B cell (primary cell): ENCODE measurements at regions of chr20 and their contacts with region 1.

Region 1: DNA sequence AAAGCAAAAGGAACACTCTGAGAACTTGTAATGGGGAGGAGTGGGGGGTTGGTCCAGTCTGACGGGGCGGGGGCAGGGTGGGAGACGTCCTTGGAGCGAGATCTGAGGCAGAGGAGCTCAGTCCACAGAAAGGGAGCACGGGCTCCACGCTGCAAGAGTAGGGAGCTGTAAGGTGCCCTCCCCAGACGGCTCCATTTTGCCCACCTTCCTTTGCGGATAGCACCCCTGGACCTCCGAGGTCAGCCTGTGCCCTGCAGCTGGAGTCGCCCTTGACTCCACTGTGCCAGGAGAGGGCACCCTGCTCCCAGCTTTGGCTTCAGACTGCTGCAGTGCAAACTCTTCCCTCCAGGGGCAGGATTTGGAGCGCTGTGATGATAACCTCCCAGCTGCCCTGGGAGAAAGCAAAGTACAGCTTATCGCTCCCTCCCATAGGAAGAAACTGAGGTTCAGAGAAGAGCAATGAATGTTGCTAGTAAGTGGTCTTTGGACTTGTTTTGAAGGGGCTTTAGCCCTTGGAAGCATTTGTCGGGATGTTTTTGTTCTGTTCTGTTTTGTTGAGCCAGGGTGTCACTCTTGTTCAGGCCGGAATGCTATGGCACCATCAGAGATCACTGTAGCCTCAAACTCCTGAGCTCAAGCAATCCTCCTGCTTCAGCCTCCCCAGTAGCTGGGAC is 9.5 kb upstream of the AHCY start:
- DNase-seq: peak; percentile 90
- ATAC-seq: peak; percentile 100
- H3K4me3 ChIP-seq: no peak overlapping the region
- H3K4me3 Mint-ChIP-seq: peak overlapping the region; percentile 32
- H3K27ac ChIP-seq: no peak overlapping the region
- H3K27ac Mint-ChIP-seq: peak overlapping the region; percentile 50
- H3K4me1 ChIP-seq: peaks cover 17 to 20% of the 10 kb centered on the region in 2 donors
- H3K4me1 Mint-ChIP-seq: peaks cover 16% of the 10 kb centered on the region
- H3K27me3 ChIP-seq: peaks cover 0 to 18% (median 13%) of the 10 kb centered on the region in 4 experiments
- H3K27me3 Mint-ChIP-seq: peaks cover 13% of the 10 kb centered on the region
- CTCF ChIP-seq: peak; percentile 100

Region 2: DNA sequence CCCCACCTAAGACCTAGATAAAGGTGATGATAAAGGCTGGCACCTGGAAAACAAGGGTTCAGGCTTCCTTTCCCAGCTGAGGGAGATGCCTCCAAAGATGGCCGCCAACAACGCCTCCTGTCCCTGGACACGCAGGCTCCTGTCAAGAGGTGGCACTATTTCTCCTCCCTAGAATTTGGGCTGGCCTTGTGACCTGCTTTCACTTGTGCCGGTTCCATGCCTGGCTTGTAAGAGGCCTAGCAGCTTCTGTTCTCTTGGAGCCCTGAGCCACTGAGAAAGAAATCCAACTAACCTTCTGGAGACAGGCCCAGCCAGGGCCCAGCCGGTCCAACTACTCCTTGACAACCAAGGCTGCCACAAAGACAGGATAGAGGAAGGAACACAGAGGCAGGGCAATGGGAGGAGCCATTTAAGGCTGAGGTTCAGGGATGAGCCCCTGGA is 379.2 kb before region 1 on chr20:
- CTCF ChIA-PET with region 1: no interaction called
- POLR2A ChIA-PET with region 1: no interaction called
- intact Hi-C with region 1: no loop called
- DNase-seq: peak; percentile 47
- ATAC-seq: peak; percentile 45
- H3K4me3 ChIP-seq: no peak overlapping the region
- H3K4me3 Mint-ChIP-seq: no peak overlapping the region
- H3K27ac ChIP-seq: no peak overlapping the region
- H3K27ac Mint-ChIP-seq: no peak overlapping the region
- H3K4me1 ChIP-seq: no peaks in the 10 kb centered on the region
- H3K4me1 Mint-ChIP-seq: no peaks in the 10 kb centered on the region
- H3K27me3 ChIP-seq: no peaks in the 10 kb centered on the region
- H3K27me3 Mint-ChIP-seq: peaks cover 13% of the 10 kb centered on the region
- CTCF ChIP-seq: no peak

Region 3: GRCh38 chr20:34363062-34363464 is 50.4 kb after region 1 on chr20 and contains the start of gene ITCH:
- CTCF ChIA-PET with region 1: interaction called, 25 read pairs
- POLR2A ChIA-PET with region 1: no interaction called
- intact Hi-C with region 1: loop called (anchors 2 kb)
- DNase-seq: peak; percentile 94
- ATAC-seq: peak; percentile 96
- H3K4me3 ChIP-seq: peak within 1 kb of the TSS; percentile 46 to 91 (median 88)
- H3K4me3 Mint-ChIP-seq: peak within 1 kb of the TSS; percentile 97
- H3K27ac ChIP-seq: peak within 1 kb of the TSS; percentile 81 to 96
- H3K27ac Mint-ChIP-seq: peak within 1 kb of the TSS; percentile 98
- H3K4me1 ChIP-seq: peaks cover 34 to 38% of the 10 kb centered on the region in 2 donors
- H3K4me1 Mint-ChIP-seq: peaks cover 35% of the 10 kb centered on the region
- H3K27me3 ChIP-seq: no peaks in the 10 kb centered on the region
- H3K27me3 Mint-ChIP-seq: no peaks in the 10 kb centered on the region
- CTCF ChIP-seq: no peak
- total RNA-seq, gene ITCH: 89.6 and 110 TPM in 2 replicates

Region 4: GRCh38 chr20:34437330-34437986 is 124.8 kb after region 1 on chr20:
- CTCF ChIA-PET with region 1: interaction called, 27 read pairs
- POLR2A ChIA-PET with region 1: no interaction called
- intact Hi-C with region 1: no loop called
- DNase-seq: no peak
- ATAC-seq: no peak
- H3K4me3 ChIP-seq: no peak overlapping the region
- H3K4me3 Mint-ChIP-seq: no peak overlapping the region
- H3K27ac ChIP-seq: peak overlapping the region in 1 of 2 donors; percentile 18
- H3K27ac Mint-ChIP-seq: peak overlapping the region; percentile 46
- H3K4me1 ChIP-seq: peaks cover 8 to 16% of the 10 kb centered on the region in 2 donors
- H3K4me1 Mint-ChIP-seq: peaks cover 21% of the 10 kb centered on the region
- H3K27me3 ChIP-seq: no peaks in the 10 kb centered on the region
- H3K27me3 Mint-ChIP-seq: no peaks in the 10 kb centered on the region
- CTCF ChIP-seq: no peak

Region 5: DNA sequence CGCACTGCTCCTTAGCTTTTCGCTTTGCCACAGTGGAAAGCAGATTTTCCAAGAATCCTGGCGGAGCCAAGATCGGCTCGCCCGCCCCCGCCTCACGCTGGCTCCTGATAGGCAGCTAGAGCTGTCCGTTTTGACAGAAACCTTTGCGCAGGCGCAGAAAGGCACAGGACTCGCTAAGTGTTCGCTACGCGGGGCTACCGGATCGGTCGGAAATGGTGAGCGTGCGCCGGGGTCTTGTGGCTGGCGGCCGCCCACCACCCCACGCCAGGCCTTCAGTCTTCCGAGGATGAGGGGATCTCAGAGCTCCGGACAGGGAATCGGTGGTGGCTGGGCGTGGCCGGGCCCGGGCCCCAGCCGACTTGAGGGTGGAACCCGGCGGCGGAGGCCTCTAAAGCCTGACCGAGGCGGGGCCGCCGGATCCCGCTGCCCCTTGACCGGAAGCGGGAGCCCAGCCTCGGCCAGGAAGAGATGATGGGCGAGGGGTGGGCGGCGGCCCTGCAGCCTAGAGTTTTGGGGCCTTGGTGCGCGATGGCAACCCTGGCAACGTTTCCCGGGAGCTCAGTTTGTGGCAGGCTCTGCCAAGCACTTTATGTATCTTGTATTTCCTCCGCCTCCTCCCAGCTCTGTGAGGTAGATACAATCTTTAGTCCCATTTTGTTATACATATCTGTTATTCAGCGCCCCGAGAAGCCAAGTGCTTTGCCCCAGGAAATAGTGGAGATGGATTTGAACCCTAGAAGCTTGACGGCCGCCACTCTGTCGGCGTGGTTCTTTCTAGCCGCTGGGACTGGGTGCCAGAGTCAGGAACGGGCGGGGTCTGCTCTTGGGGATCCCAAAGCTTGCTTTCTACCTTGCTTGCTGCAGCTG is 203.8 kb after region 1 on chr20 and contains the start of gene DYNLRB1:
- CTCF ChIA-PET with region 1: interaction called, 49 read pairs
- POLR2A ChIA-PET with region 1: no interaction called
- intact Hi-C with region 1: loop called (anchors 1 kb)
- DNase-seq: peak; percentile 95
- ATAC-seq: peak; percentile 83
- H3K4me3 ChIP-seq: peak within 1 kb of the TSS; percentile 66 to 99 (median 95)
- H3K4me3 Mint-ChIP-seq: peak within 1 kb of the TSS; percentile 97
- H3K27ac ChIP-seq: peak within 1 kb of the TSS; percentile 31 to 85
- H3K27ac Mint-ChIP-seq: peak within 1 kb of the TSS; percentile 97
- H3K4me1 ChIP-seq: peaks cover 5 to 10% of the 10 kb centered on the region in 2 donors
- H3K4me1 Mint-ChIP-seq: peaks cover 47% of the 10 kb centered on the region
- H3K27me3 ChIP-seq: no peaks in the 10 kb centered on the region
- H3K27me3 Mint-ChIP-seq: no peaks in the 10 kb centered on the region
- CTCF ChIP-seq: no peak
- total RNA-seq, gene DYNLRB1: 43.8 and 55.3 TPM in 2 replicates

Region 6: GRCh38 chr20:34704177-34705007 is 391.7 kb after region 1 on chr20 and contains the start of gene TP53INP2:
- CTCF ChIA-PET with region 1: interaction called, 16 read pairs
- POLR2A ChIA-PET with region 1: no interaction called
- intact Hi-C with region 1: no loop called
- DNase-seq: peak; percentile 95
- ATAC-seq: peak; percentile 57
- H3K4me3 ChIP-seq: peak within 1 kb of the TSS; percentile 68 to 89 (median 81)
- H3K4me3 Mint-ChIP-seq: peak within 1 kb of the TSS; percentile 95
- H3K27ac ChIP-seq: peak within 1 kb of the TSS; percentile 52 to 95
- H3K27ac Mint-ChIP-seq: peak within 1 kb of the TSS; percentile 93
- H3K4me1 ChIP-seq: peaks cover 18 to 26% of the 10 kb centered on the region in 2 donors
- H3K4me1 Mint-ChIP-seq: peaks cover 26% of the 10 kb centered on the region
- H3K27me3 ChIP-seq: peaks cover 0 to 15% (median 0%) of the 10 kb centered on the region in 4 experiments
- H3K27me3 Mint-ChIP-seq: peaks cover 9% of the 10 kb centered on the region
- CTCF ChIP-seq: no peak
- total RNA-seq, gene TP53INP2: 7.7 and 8.1 TPM in 2 replicates